ENCODE measurements at regions of chr17 and their contacts with region 1.

Region 1: DNA sequence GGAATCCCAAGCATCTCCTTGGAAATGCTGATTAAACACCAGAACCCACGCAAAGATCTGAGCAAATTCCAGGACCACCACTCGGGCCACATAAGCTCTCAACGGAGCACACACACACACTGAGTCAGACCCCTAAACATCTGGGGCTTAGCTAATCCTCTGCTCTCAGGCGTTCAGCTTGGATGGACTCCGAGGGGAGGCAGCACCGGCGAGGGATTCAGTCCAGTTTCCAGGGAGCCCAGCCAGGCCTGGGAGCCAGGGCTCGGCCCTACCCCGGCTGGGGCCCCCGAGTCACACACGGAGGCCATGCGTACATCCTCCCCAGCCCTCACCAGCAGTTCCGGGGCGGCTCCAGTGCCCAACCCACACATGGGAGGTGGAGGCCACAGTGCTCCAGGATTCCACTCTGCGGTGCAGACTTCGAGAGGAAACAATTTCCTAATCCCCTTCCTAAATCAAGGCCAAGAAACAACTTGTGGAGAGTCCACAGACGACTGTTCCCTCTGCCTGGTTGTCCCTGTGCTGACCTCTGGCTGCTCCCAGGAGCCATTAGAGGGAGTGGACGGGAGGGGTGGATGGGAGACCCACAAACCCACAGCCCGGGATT is 70.5 kb downstream of the GAS7 start:
- DNase-seq: peak; percentile 99
- ATAC-seq: peak; percentile 81
- H3K4me3 ChIP-seq: no peak overlapping the region
- H3K27ac ChIP-seq: peak overlapping the region; percentile 99
- H3K4me1 ChIP-seq: peaks cover 33% of the 10 kb centered on the region
- H3K27me3 ChIP-seq: no peaks in the 10 kb centered on the region
- CTCF ChIP-seq: peak; percentile 28; the same call in 1 of the 2 replicates
- POLR2A ChIP-seq: no peak; the same call in none of the 2 replicates
- RAD21 ChIP-seq: peak; percentile 55

Region 2: GRCh38 chr17:9575381-9576101 is 552.4 kb before region 1 on chr17 and contains the start of gene STX8:
- CTCF ChIA-PET with region 1: no interaction called
- POLR2A ChIA-PET with region 1: no interaction called
- dilution Hi-C with region 1: no loop called
- in situ Hi-C with region 1: no loop called
- intact Hi-C with region 1: loop called (anchors 5 kb)
- DNase-seq: peak; percentile 87
- ATAC-seq: peak; percentile 92
- H3K4me3 ChIP-seq: peak within 1 kb of the TSS; percentile 95
- H3K27ac ChIP-seq: peak within 1 kb of the TSS; percentile 78
- H3K4me1 ChIP-seq: peaks cover 5% of the 10 kb centered on the region; the same call in 1 of the 2 replicates
- H3K27me3 ChIP-seq: no peaks in the 10 kb centered on the region
- CTCF ChIP-seq: 0 out of 2 replicates have a peak, but pooled peaks have one; percentile 8
- POLR2A ChIP-seq: no peak
- RAD21 ChIP-seq: no peak
- total RNA-seq, gene STX8: 26.5 and 79.2 TPM in 2 replicates

Region 3: GRCh38 chr17:10059369-10060211 is 68.3 kb before region 1 on chr17:
- CTCF ChIA-PET with region 1: no interaction called
- POLR2A ChIA-PET with region 1: no interaction called
- dilution Hi-C with region 1: no loop called
- in situ Hi-C with region 1: no loop called
- intact Hi-C with region 1: no loop called
- DNase-seq: peak; percentile 15
- ATAC-seq: no peak
- H3K4me3 ChIP-seq: no peak overlapping the region
- H3K27ac ChIP-seq: no peak overlapping the region
- H3K4me1 ChIP-seq: no peaks in the 10 kb centered on the region; the same call in 1 of the 2 replicates
- H3K27me3 ChIP-seq: no peaks in the 10 kb centered on the region
- CTCF ChIP-seq: no peak
- POLR2A ChIP-seq: no peak
- RAD21 ChIP-seq: no peak

Region 4: GRCh38 chr17:10086611-10087010 is 41.3 kb before region 1 on chr17:
- CTCF ChIA-PET with region 1: no interaction called
- POLR2A ChIA-PET with region 1: no interaction called
- dilution Hi-C with region 1: no loop called
- in situ Hi-C with region 1: no loop called
- intact Hi-C with region 1: loop called (anchors 1 kb)
- DNase-seq: no peak
- ATAC-seq: no peak
- H3K4me3 ChIP-seq: no peak overlapping the region
- H3K27ac ChIP-seq: no peak overlapping the region
- H3K4me1 ChIP-seq: peaks cover 14% of the 10 kb centered on the region
- H3K27me3 ChIP-seq: no peaks in the 10 kb centered on the region
- CTCF ChIP-seq: no peak
- POLR2A ChIP-seq: no peak
- RAD21 ChIP-seq: no peak

Region 5: GRCh38 chr17:10198509-10199253 is 70.8 kb after region 1 on chr17 and contains the start of gene GAS7:
- CTCF ChIA-PET with region 1: no interaction called
- POLR2A ChIA-PET with region 1: no interaction called
- dilution Hi-C with region 1: no loop called
- in situ Hi-C with region 1: no loop called
- intact Hi-C with region 1: loop called (anchors 2 kb)
- DNase-seq: peak; percentile 26
- ATAC-seq: peak; percentile 89
- H3K4me3 ChIP-seq: peak within 1 kb of the TSS; percentile 67
- H3K27ac ChIP-seq: peak within 1 kb of the TSS; percentile 27; the same call in 1 of the 2 replicates
- H3K4me1 ChIP-seq: peaks cover 4% of the 10 kb centered on the region; the same call in 1 of the 2 replicates
- H3K27me3 ChIP-seq: peaks cover 4% of the 10 kb centered on the region
- CTCF ChIP-seq: no peak
- POLR2A ChIP-seq: no peak
- RAD21 ChIP-seq: peak; percentile 13; the same call in 1 of the 2 replicates
- total RNA-seq, gene GAS7: 5.0 and 6.4 TPM in 2 replicates

Measured in IMR-90 (cell line).